ENCODE measurements at regions of chr3 and their contacts with region 1.

Region 1: GRCh38 chr3:160027541-160028195 is 39.0 kb downstream of the IL12A start:
- DNase-seq: no peak
- ATAC-seq: no peak

Region 2: DNA sequence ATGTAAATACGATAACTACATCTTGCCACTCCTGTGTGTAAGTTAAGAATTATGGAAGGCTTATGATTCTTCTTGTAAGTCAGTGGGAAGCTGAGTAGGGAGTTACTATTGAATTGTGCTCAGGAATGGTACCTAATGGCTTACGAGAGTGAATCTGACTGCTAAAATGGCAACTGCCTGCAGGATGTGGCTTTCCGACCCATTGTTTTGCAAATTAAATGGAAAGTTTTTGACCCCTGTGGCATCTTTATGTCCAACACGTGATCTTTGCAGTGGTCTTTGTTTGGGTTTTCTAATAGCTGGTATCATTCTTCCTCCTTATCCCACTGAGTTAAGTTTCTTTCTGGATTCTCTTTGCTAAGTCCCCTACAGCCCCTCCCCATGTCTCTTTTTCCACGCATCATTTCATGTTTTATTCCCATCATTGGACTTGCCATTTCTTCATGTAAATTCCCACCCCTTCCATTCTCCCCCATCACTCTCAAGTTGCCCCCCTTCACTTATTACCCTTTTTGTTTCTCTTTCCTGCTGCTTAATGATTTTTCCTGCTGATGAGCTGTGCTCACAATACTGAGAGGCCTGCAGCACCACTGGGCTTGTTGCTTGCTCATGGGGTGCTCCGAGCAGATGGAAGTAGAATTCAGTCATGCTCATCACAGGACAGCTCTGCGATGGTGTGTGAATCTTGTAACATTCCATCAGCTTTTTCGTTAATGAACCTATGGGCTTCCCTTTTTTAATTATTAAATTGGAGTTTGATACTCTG is 467.3 kb before region 1 on chr3:
- intact Hi-C with region 1: no loop called
- DNase-seq: no peak
- ATAC-seq: no peak

Region 3: DNA sequence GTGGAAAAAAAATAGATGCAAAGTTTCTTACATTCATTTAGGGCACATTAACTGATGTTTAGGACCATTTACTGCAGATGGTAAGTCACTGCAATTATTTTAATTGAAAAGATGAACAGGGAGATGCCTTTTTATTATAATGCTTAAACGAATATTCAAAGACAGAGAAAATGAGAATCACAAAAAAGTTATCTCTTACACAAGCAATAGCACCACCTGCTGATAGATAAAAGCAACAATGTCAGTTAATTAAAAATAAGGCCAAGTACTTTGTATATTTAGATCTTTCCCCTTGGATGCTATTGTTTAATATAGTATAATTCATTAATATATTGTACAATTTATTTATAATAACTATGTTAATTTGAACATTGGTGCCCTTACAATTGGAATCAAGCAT is 315.5 kb after region 1 on chr3:
- intact Hi-C with region 1: loop called (anchors 5 kb)
- DNase-seq: no peak
- ATAC-seq: no peak

Region 4: GRCh38 chr3:160413613-160414248 is 386.1 kb after region 1 on chr3:
- intact Hi-C with region 1: loop called (anchors 5 kb)
- DNase-seq: no peak
- ATAC-seq: peak; percentile 64

Region 5: DNA sequence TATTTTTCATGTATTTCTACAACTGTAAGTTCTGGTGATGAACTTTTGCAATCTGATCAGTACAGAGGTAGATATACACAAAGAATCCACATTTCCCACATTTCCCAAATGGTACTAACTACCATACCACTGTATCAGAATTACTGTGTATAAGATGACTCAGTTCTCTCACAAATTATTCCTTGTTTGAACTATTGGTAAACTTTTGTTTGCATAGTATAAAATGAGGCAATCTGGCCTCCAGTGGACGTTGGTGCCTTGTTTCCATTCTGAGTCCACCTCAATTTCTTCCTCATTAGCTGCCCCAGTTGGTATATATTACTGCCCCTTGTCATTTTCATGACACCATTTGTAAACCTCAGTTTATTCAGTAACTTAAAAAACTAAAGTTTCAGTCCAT is 1305.1 kb after region 1 on chr3:
- intact Hi-C with region 1: no loop called
- DNase-seq: no peak
- ATAC-seq: no peak